Activated CD8-positive, alpha-beta T cell treated with anti-CD3 and anti-CD28 coated beads, Interleukin-2, amount 10 ng/mL, durations not matched to agents 7 days and 5 days (primary cell): ENCODE measurements at regions of chr4 and their contacts with region 1.

Region 1: GRCh38 chr4:48127682-48128394 is 6.2 kb downstream of the TXK start:
- DNase-seq: peak; percentile 93
- ATAC-seq: peak; percentile 81
- H3K4me3 Mint-ChIP-seq: peak overlapping the region; percentile 90
- H3K27ac Mint-ChIP-seq: peak overlapping the region; percentile 92
- H3K4me1 Mint-ChIP-seq: peaks cover 85% of the 10 kb centered on the region
- H3K27me3 Mint-ChIP-seq: no peaks in the 10 kb centered on the region

Region 2: DNA sequence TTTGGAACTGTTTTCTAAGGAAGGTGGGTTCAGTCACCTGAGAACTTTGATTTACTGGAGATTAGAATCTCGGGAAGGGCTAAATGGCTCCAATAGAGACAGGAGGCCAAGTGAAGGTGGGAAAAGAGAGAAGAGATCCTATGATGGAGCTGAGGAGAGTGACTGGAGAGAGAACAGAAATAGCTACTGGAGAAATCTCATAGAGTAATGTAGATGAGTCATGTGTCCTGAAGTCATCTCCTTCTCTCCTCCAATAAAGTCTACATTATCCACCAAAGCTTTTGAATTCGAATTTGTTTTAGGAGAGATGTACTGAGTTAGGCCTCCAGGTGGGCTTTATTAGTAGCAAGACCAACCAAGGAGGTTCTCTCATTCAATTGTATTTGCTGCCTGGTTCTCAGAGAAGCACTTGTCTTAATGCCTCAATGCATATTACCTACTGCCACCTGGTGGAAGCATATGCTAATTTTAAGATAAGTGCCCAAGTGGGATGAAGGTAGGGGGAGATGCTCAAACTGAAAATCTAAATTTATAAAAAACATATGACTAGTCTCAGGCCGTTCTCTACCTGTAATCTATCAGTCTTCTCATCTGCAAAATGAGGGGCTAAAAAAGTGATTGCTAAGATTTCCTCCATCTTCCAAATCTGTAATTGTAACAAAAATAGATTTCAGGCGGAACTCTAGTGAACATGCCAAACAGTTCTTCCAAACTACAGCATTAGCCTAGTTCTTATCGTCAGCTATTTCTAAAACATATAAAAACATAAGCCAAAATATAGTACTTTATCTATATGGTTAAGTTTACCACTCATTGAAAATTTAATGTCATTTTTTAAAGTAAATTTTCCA is 18.2 kb before region 1 on chr4:
- CTCF ChIA-PET with region 1: interaction called, 43 read pairs
- POLR2A ChIA-PET with region 1: interaction called, 3 read pairs
- DNase-seq: peak; percentile 57
- ATAC-seq: peak; percentile 73
- H3K4me3 Mint-ChIP-seq: no peak overlapping the region
- H3K27ac Mint-ChIP-seq: no peak overlapping the region
- H3K4me1 Mint-ChIP-seq: peaks cover 43% of the 10 kb centered on the region
- H3K27me3 Mint-ChIP-seq: no peaks in the 10 kb centered on the region

Region 3: DNA sequence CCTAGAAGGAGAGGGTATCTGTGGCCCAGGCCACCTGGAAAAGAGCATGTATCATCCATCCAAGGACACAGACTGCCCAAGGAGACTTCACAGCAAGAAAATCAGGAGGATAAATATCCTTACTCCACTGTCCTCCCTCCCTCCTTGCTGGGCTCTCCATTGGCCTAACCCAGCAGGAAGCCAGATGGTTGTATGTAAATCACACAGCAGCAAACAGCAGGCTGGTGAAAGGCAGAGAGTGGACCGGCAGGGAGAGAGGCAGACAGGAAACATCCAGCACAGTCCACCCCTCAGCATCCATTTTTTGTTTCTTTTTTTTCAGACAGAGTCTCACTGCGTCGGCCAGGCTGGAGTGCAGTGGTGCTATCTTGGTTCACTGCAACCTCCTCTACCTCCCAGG is 11.3 kb before region 1 on chr4:
- CTCF ChIA-PET with region 1: interaction called, 43 read pairs
- POLR2A ChIA-PET with region 1: interaction called, 4 read pairs
- DNase-seq: no peak
- ATAC-seq: no peak
- H3K4me3 Mint-ChIP-seq: no peak overlapping the region
- H3K27ac Mint-ChIP-seq: peak overlapping the region; percentile 20
- H3K4me1 Mint-ChIP-seq: peaks cover 70% of the 10 kb centered on the region
- H3K27me3 Mint-ChIP-seq: no peaks in the 10 kb centered on the region

Region 4: GRCh38 chr4:48141048-48141447 is 13.2 kb after region 1 on chr4:
- CTCF ChIA-PET with region 1: interaction called, 284 read pairs
- POLR2A ChIA-PET with region 1: interaction called, 149 read pairs
- DNase-seq: no peak
- ATAC-seq: no peak
- H3K4me3 Mint-ChIP-seq: no peak overlapping the region
- H3K27ac Mint-ChIP-seq: no peak overlapping the region
- H3K4me1 Mint-ChIP-seq: peaks cover 49% of the 10 kb centered on the region
- H3K27me3 Mint-ChIP-seq: no peaks in the 10 kb centered on the region

Region 5: DNA sequence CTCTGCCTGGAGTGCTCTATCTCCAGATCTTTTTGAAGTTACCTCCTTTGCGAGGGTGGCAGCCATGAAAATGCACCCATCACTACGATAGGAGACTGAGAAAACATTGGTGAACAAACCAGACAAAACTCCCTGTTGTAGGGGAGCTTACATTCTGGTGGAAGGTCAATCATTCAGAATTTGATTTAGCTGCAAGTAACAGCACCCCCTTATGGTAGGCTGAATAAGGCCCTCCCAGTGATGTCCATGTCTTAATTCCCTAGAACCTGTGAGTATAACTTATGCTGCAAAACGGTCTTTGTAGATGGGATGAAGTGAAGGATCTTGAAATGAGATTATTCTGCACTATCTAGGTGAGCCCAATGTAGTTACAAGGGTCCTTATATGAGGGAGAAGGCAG is 147.4 kb after region 1 on chr4:
- CTCF ChIA-PET with region 1: interaction called, 31 read pairs
- POLR2A ChIA-PET with region 1: interaction called, 3 read pairs
- DNase-seq: peak; percentile 25
- ATAC-seq: peak; percentile 33
- H3K4me3 Mint-ChIP-seq: no peak overlapping the region
- H3K27ac Mint-ChIP-seq: no peak overlapping the region
- H3K4me1 Mint-ChIP-seq: peaks cover 15% of the 10 kb centered on the region
- H3K27me3 Mint-ChIP-seq: no peaks in the 10 kb centered on the region

Region 6: GRCh38 chr4:48629458-48629857 is 501.6 kb after region 1 on chr4:
- CTCF ChIA-PET with region 1: no interaction called
- POLR2A ChIA-PET with region 1: no interaction called
- DNase-seq: no peak
- ATAC-seq: no peak
- H3K4me3 Mint-ChIP-seq: no peak overlapping the region
- H3K27ac Mint-ChIP-seq: no peak overlapping the region
- H3K4me1 Mint-ChIP-seq: peaks cover 2% of the 10 kb centered on the region
- H3K27me3 Mint-ChIP-seq: no peaks in the 10 kb centered on the region